Head of caudate nucleus (tissue), 42 donors: ENCODE measurements at regions of chr10 and their contacts with region 1.

Region 1: DNA sequence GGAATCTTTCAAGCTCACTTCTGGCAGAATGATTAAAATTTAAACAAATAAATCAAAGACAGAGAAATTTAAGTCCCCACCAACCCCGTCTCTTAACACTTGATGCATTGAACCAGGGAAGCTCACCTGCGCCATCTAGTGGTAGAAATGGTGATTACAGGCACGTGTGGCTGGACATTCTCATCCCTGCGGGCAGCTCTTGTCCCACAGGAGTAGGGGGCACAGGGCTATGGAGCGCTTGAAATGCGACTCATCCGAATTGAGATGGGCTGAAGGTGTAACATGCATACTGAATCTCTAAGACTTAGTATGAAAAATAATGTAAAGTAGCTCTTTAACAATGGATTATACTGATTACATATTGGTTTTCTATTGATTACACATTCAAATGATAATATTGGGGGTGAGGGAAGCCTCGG is 24.8 kb upstream of the SLIT1 start:
- DNase-seq: peak in 40 of 42 donors; percentile 36 to 88 (median 73)

Region 2: GRCh38 chr10:97072851-97073665 is 137.5 kb before region 1 on chr10:
- intact Hi-C with region 1: loop called (anchors 2 kb)
- DNase-seq: peak; percentile 59 to 95 (median 91)

Region 3: DNA sequence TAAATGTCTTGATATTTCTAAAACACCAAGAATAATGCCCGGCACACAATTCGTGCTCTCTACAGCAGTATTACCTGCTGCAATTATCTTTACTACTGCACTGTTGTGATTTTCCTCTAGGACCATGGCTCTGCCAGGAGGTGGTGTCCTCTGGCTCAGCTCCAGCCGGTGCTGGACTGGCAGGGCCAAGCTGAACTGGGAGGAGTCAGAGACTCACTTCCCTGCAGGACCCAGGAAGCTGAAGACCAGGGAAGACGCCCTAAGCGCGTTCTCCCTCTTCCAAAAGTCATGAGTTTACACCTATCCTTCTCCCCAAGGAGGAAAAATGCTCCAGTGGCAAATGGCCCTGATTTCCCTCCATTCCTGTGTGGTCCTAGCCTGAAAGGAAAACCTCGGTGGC is 40.2 kb before region 1 on chr10:
- intact Hi-C with region 1: no loop called
- DNase-seq: no peak

Region 4: GRCh38 chr10:97318772-97319651 is 108.5 kb after region 1 on chr10 and contains the start of gene FRAT1:
- intact Hi-C with region 1: no loop called
- DNase-seq: peak; percentile 78 to 96 (median 91)